ENCODE measurements at regions of chr17 and their contacts with region 1.

Region 1: DNA sequence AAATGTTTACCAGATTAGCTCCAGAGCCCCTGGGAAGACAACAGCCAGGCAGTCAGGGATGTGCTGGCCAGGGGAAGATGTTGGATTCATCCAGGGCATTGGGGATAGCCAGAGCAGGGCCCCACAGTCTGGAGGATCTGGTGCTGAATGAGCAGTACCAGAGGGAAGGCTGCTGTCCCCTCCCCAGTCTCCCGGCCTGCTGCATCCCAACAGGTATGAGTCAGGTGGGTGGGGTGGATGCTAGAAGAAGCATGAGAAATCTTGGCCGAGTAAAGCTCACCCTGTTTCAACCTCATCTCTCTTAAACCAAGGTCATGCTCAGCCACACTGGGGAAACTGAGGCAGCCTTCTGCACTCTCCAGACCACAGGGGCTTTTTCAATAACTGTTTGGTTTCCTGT is 71.9 kb upstream of the SEC14L1 start:
- DNase-seq: no peak
- ATAC-seq: peak; percentile 48
- H3K4me3 ChIP-seq: no peak overlapping the region
- H3K27ac ChIP-seq: no peak overlapping the region
- H3K4me1 ChIP-seq: peaks cover 0 to 13% of the 10 kb centered on the region in 2 experiments; a peak in 2 of 4 replicates
- H3K27me3 ChIP-seq: 0 out of 2 replicates have a peak, but pooled peaks cover 10% of the 10 kb centered on the region
- CTCF ChIP-seq: no peak
- POLR2A ChIP-seq: no peak
- RAD21 ChIP-seq: no peak

Region 2: GRCh38 chr17:76726231-76726775 is 342.6 kb before region 1 on chr17 and contains the start of gene JMJD6:
- CTCF ChIA-PET with region 1: interaction called, 3 read pairs
- POLR2A ChIA-PET with region 1: no interaction called
- RAD21 ChIA-PET with region 1: no interaction called
- intact Hi-C with region 1: loop called (anchors 2 kb)
- DNase-seq: peak; percentile 97
- ATAC-seq: peak; percentile 90
- H3K4me3 ChIP-seq: peak within 1 kb of the TSS; percentile 97
- H3K27ac ChIP-seq: peak within 1 kb of the TSS; percentile 99
- H3K4me1 ChIP-seq: peaks cover 13 to 21% of the 10 kb centered on the region in 2 experiments
- H3K27me3 ChIP-seq: no peaks in the 10 kb centered on the region
- CTCF ChIP-seq: no peak
- POLR2A ChIP-seq: peak; percentile 39
- RAD21 ChIP-seq: no peak
- total RNA-seq, gene JMJD6: 47.6 TPM

Region 3: DNA sequence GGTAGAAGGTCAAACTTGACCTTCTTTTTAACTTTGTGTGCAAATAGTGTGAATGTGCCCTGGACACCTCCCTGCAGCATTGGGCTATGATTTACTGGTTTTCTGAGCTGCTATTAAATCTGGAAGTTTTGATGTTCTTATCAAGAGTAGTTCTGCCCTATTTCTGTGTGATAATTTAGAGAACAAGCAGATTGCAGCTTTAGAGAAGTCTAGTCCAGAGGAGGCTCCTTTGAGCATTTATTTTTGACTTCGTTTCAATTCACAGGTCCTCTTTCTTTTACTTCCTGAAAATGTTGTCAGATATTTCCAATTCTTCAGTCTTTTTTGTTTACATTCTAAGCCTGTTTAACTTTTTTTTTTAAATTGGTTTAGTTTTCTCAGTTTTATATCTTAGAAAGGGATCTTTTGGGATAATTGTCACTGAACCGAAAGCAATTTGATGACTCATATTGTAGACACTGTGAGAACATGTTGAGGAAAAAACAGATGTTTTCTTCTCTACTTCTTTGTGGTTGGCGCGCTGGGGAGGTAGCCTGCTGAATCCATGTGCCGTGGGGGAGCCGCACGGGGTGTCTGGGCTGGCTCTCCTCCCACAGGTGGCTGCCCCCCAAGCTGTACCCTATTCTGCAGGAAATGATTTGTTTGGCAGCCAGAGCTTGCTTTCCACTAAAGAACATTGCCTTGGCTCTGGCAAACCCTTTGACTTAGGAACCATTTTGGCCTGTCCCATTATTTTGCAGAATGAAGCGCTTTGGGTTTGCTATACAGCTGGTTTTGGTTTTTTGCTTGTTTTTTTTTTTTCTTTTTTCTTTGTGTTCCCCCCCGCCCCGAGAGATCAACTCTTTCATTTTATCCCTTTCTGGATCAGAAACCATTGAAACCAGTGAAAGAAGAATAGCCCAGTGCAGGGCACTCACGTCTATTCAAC is 277.6 kb before region 1 on chr17:
- CTCF ChIA-PET with region 1: no interaction called
- POLR2A ChIA-PET with region 1: no interaction called
- RAD21 ChIA-PET with region 1: no interaction called
- intact Hi-C with region 1: loop called (anchors 5 kb)
- DNase-seq: no peak
- ATAC-seq: peak; percentile 55
- H3K4me3 ChIP-seq: peak overlapping the region; percentile 17 to 31
- H3K27ac ChIP-seq: peak overlapping the region; percentile 45
- H3K4me1 ChIP-seq: peaks cover 39 to 55% of the 10 kb centered on the region in 2 experiments
- H3K27me3 ChIP-seq: no peaks in the 10 kb centered on the region
- CTCF ChIP-seq: no peak
- POLR2A ChIP-seq: no peak
- RAD21 ChIP-seq: no peak

Region 4: GRCh38 chr17:76868176-76868668 is 200.7 kb before region 1 on chr17 and contains the start of gene MGAT5B:
- CTCF ChIA-PET with region 1: interaction called, 24 read pairs
- POLR2A ChIA-PET with region 1: no interaction called
- RAD21 ChIA-PET with region 1: interaction called, 3 to 10 read pairs
- intact Hi-C with region 1: no loop called
- DNase-seq: peak; percentile 56
- ATAC-seq: peak; percentile 81
- H3K4me3 ChIP-seq: peak within 1 kb of the TSS; percentile 29 to 42
- H3K27ac ChIP-seq: peak within 1 kb of the TSS; percentile 26; the same call in 1 of the 2 replicates
- H3K4me1 ChIP-seq: peaks cover 32 to 50% of the 10 kb centered on the region in 2 experiments
- H3K27me3 ChIP-seq: no peaks in the 10 kb centered on the region
- CTCF ChIP-seq: peak; percentile 68 to 81 (median 80)
- POLR2A ChIP-seq: no peak
- RAD21 ChIP-seq: peak; percentile 89
- total RNA-seq, gene MGAT5B: 4.4 TPM

Region 5: DNA sequence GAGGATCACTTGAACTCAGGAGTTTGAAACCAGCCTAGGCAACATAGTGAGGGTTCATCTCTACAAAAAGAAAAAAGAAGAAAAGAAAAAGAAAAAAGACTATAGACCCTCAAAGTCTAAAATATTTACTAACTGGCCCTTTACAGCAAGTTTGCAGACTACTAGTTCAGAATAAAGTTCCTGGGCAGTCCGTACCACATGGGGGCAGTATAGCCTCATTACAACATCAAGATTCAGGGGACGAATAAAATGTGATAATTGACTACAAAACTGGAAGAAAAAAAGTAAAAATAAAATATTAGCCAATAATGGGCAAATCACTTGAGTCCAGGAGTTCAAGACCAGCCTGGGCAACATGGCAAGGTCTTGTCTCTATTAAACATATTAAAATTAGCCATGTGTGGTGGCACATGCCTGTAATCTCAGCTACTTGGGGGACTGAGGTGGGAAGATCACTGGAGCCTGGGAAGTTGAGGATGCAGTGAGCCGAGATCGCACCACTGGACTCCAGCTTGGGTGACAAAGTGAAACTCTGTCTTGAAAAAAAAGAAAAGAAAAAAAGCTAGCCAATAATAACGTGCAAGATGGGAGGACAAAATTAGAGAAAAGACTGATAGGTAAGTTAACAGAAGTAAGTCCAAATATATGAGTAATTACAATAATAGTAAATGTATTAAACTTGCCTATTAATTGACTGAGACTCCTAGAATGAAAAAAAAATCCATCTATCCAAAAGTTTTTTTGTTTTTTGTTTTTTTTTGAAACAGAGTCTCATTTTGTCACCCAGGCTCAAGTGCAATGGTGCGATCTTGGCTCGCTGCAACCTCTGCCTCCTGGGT is 57.5 kb before region 1 on chr17:
- CTCF ChIA-PET with region 1: interaction called, 5 read pairs
- POLR2A ChIA-PET with region 1: no interaction called
- RAD21 ChIA-PET with region 1: no interaction called
- intact Hi-C with region 1: loop called (anchors 1 kb)
- DNase-seq: peak; percentile 48
- ATAC-seq: peak; percentile 81
- H3K4me3 ChIP-seq: no peak overlapping the region
- H3K27ac ChIP-seq: no peak overlapping the region
- H3K4me1 ChIP-seq: no peaks in the 10 kb centered on the region
- H3K27me3 ChIP-seq: no peaks in the 10 kb centered on the region
- CTCF ChIP-seq: peak; percentile 88 to 93 (median 89)
- POLR2A ChIP-seq: no peak
- RAD21 ChIP-seq: peak; percentile 89

Region 6: DNA sequence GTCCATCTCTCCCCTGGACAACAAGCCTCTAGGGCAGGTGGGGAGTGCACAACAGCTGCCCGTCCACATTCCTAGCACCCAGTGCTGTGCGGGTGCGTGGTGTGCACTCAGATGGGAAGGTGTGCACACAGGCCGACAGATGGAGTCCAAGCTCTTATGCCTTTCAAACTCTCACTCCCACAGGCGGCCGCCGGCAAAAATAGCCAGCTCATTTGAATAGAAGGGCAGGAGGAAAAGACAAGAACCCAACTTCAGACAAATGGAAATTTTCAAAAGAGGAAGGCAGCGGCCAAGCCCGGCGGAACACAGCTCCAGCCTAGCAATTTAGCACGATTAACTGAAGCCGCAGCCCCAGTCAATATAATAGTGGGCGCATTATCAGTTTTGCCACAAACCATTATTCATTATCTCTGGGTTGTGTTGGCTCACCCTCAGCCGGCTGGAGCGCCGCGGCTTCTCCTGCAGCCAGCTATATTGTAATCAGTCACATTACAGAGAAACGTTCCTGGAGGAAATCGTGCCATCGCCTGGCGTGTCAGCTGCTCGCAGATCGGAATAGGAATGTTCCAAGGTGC is 32.0 kb before region 1 on chr17:
- CTCF ChIA-PET with region 1: no interaction called
- POLR2A ChIA-PET with region 1: no interaction called
- RAD21 ChIA-PET with region 1: no interaction called
- intact Hi-C with region 1: no loop called
- DNase-seq: no peak
- ATAC-seq: no peak
- H3K4me3 ChIP-seq: no peak overlapping the region
- H3K27ac ChIP-seq: no peak overlapping the region
- H3K4me1 ChIP-seq: no peaks in the 10 kb centered on the region
- H3K27me3 ChIP-seq: no peaks in the 10 kb centered on the region; the same call in 1 of the 2 replicates
- CTCF ChIP-seq: no peak
- POLR2A ChIP-seq: no peak
- RAD21 ChIP-seq: no peak

Region 7: GRCh38 chr17:77054936-77055335 is 14.0 kb before region 1 on chr17:
- CTCF ChIA-PET with region 1: interaction called, 52 read pairs
- POLR2A ChIA-PET with region 1: no interaction called
- RAD21 ChIA-PET with region 1: interaction called in 1 of 2 experiments, 3 read pairs
- intact Hi-C with region 1: no loop called
- DNase-seq: no peak
- ATAC-seq: no peak
- H3K4me3 ChIP-seq: no peak overlapping the region
- H3K27ac ChIP-seq: no peak overlapping the region
- H3K4me1 ChIP-seq: peaks cover 0 to 6% of the 10 kb centered on the region in 2 experiments; a peak in 1 of 4 replicates
- H3K27me3 ChIP-seq: no peaks in the 10 kb centered on the region
- CTCF ChIP-seq: no peak
- POLR2A ChIP-seq: no peak
- RAD21 ChIP-seq: no peak

Region 8: GRCh38 chr17:77247048-77247541 is 178.2 kb after region 1 on chr17:
- CTCF ChIA-PET with region 1: no interaction called
- POLR2A ChIA-PET with region 1: no interaction called
- RAD21 ChIA-PET with region 1: no interaction called
- intact Hi-C with region 1: loop called (anchors 5 kb)
- DNase-seq: peak; percentile 60
- ATAC-seq: peak; percentile 96
- H3K4me3 ChIP-seq: peak overlapping the region; percentile 38 to 53
- H3K27ac ChIP-seq: no peak overlapping the region; the same call in 1 of the 2 replicates
- H3K4me1 ChIP-seq: peaks cover 0 to 16% of the 10 kb centered on the region in 2 experiments; a peak in 1 of 4 replicates
- H3K27me3 ChIP-seq: no peaks in the 10 kb centered on the region
- CTCF ChIP-seq: peak; percentile 90 to 97 (median 91)
- POLR2A ChIP-seq: no peak
- RAD21 ChIP-seq: peak; percentile 96

Measured in HCT116 (cell line).